ENCODE measurements at regions of chr11 and their contacts with region 1.

Region 1: DNA sequence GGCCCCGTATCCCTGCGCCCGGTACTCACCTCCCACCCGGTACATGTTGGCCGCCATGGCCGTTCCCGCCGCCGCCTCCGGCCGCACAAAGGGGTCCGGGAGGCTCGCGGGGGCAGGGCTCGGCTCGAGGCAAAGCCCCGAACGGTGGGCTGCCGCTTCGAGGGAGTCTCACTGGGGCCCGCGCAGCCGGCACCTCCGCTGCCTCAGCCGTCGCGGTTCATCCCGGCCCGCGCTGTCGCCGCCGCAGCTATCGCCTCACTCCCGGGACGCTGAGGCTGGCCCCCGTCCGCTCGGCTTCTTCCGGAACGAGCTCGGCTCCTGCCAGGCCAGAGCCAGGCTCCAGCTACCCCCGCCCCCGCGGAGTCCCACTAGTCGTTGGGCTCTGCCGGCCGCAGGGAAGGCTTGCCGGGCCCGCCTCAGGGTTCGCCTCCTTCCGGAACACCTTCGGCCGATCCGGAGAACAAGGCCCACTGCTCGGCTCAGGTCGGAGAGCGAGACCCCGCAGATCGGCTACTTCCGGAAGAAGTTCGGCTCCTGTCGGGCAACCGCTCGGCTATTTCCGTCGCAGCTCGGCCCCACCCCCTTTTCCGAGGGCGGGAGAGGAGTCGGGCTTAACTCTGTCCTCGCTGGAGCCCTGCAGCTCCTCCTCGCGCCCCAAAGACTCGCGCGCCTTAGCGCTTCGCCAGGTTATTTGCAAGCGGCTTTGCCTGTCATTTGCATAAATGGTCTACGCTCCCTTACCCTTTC is at the start of gene MTA2:
- DNase-seq: peak; percentile 99
- ATAC-seq: peak; percentile 87
- H3K4me3 Mint-ChIP-seq: peak within 1 kb of the TSS; percentile 91
- H3K27ac Mint-ChIP-seq: peak within 1 kb of the TSS; percentile 98
- H3K4me1 Mint-ChIP-seq: peaks cover 46% of the 10 kb centered on the region
- H3K27me3 Mint-ChIP-seq: peaks cover 26% of the 10 kb centered on the region
- CTCF ChIP-seq: no peak
- total RNA-seq, gene MTA2: 101 to 115 TPM (median 103 TPM) in 3 replicates

Region 2: GRCh38 chr11:62573592-62574362 is 27.8 kb before region 1 on chr11 and contains the start of gene EEF1G:
- CTCF ChIA-PET with region 1: interaction called, 6 read pairs
- POLR2A ChIA-PET with region 1: interaction called, 12 read pairs
- DNase-seq: peak; percentile 98
- ATAC-seq: peak; percentile 97
- H3K4me3 Mint-ChIP-seq: peak within 1 kb of the TSS; percentile 99
- H3K27ac Mint-ChIP-seq: peak within 1 kb of the TSS; percentile 96
- H3K4me1 Mint-ChIP-seq: peaks cover 37% of the 10 kb centered on the region
- H3K27me3 Mint-ChIP-seq: no peaks in the 10 kb centered on the region
- CTCF ChIP-seq: no peak
- total RNA-seq, gene EEF1G: 1,667 to 1,857 TPM (median 1,846 TPM) in 3 replicates

Region 3: GRCh38 chr11:62612366-62613290 is 11.1 kb after region 1 on chr11 and contains the starts of genes EML3 and ROM1:
- CTCF ChIA-PET with region 1: interaction called, 43 read pairs
- POLR2A ChIA-PET with region 1: interaction called, 11 read pairs
- DNase-seq: peak; percentile 97
- ATAC-seq: peak; percentile 89
- H3K4me3 Mint-ChIP-seq: peak within 1 kb of the TSS; percentile 95
- H3K27ac Mint-ChIP-seq: peak within 1 kb of the TSS; percentile 41; the same call in 1 of the 2 replicates
- H3K4me1 Mint-ChIP-seq: peaks cover 28% of the 10 kb centered on the region
- H3K27me3 Mint-ChIP-seq: peaks cover 9% of the 10 kb centered on the region; the same call in 1 of the 2 replicates
- CTCF ChIP-seq: peak; percentile 93
- total RNA-seq, gene EML3: 45.5 to 54.7 TPM (median 51.1 TPM) in 3 replicates
- total RNA-seq, gene ROM1: 0.78 to 1.6 TPM (median 0.94 TPM) in 3 replicates

Region 4: DNA sequence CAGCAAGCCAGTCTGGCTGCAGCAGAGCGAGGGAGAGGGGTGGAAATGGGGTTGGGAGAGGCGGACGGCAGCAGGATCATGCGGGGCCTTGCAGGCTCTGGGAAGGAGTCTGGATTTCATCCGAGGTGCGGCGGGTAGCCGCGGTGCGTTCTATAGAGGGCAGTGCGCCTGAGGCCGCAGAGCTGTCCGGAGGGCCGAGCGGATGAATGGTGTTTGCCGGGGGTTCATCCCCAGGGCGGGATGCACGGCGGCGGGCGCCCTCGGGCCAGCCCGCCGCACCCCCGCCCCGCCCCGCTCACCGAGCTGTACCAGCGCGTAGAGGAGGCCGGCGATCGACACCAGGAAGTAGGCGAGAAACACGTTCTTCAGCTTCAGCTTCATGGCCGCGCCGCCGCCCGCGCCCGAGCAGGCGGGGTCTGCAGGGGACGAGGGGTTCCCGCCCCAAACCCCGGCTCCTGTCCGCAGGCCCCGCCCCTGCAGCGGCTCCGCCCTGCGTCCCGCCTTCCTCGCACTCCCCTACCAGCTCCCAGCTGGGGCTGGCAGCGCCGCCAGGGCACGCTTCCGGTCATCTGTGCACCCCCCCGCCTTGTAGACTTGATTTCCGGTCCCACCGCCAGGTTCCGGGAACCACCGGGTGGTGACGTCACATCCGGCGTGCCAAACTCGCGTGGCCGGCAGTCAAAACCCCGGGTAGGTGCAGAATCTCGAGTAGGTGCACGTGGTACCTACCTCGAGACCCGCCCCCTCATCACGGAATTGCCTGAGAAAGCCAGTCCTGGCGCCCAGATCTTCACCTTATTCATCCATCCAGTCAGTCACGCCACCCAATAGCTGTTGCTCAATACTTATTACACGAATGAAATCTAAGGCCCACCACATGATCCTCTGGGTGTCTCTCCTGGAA is 20.3 kb after region 1 on chr11 and contains the start of gene B3GAT3:
- CTCF ChIA-PET with region 1: interaction called, 5 read pairs
- POLR2A ChIA-PET with region 1: interaction called, 12 read pairs
- DNase-seq: peak; percentile 99
- ATAC-seq: peak; percentile 97
- H3K4me3 Mint-ChIP-seq: peak within 1 kb of the TSS; percentile 97
- H3K27ac Mint-ChIP-seq: peak within 1 kb of the TSS; percentile 93
- H3K4me1 Mint-ChIP-seq: peaks cover 16% of the 10 kb centered on the region
- H3K27me3 Mint-ChIP-seq: no peaks in the 10 kb centered on the region
- CTCF ChIP-seq: no peak
- total RNA-seq, gene B3GAT3: 41.2 to 43.9 TPM (median 43.3 TPM) in 3 replicates